Ovary (tissue), 10 donors: ENCODE measurements at regions of chr17 and their contacts with region 1.

Region 1: DNA sequence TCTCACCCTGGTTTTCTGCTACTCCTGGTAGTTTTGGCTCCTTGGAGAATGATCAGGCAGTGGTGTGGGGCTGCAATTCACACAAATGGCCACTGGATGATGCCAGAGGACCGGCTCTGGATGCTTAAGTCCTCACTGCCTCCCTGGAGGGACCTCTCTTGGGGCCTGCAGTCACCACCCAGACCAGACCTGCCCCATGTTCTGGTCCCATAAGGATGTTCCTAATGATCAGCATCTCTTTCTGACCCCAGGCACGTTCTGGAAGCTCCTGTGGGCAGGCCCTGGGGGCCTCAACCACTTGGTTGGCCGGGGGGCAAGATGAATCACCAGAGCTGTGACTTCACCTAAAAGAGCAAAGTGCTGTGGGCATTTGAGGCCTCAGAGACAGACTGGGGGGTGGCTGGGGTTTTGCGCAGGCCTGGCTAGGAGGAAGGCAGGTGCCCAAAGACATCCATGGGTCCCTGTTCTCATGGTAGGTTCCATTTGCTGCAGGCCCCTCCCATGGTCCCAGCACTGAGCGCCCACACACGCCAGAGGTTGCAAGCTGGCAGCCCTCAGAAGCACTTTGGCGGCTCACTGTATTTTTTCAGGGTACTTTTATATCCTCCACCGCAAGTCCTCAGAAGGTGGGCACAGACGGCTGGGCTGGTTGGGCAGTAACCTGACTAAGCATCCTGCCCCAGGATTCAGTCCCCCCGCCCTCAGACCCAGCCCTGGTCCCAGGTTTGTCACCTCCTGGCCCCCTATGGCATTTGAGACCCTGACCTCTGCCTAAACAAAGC is 53.2 kb downstream of the NT5M start:
- DNase-seq: peak; percentile 66 to 87 (median 78)
- H3K4me3 ChIP-seq: no peak overlapping the region
- H3K27ac ChIP-seq: no peak overlapping the region
- H3K4me1 ChIP-seq: no peaks in the 10 kb centered on the region
- H3K27me3 ChIP-seq: no peaks in the 10 kb centered on the region
- CTCF ChIP-seq: peak; percentile 90 to 97 (median 95)
- EP300 ChIP-seq: no peak
- POLR2A ChIP-seq: no peak

Region 2: GRCh38 chr17:17641621-17642409 is 285.5 kb after region 1 on chr17:
- intact Hi-C with region 1: loop called (anchors 2 kb)
- DNase-seq: peak; percentile 72 to 87 (median 84)
- H3K4me3 ChIP-seq: no peak overlapping the region
- H3K27ac ChIP-seq: no peak overlapping the region
- H3K4me1 ChIP-seq: no peaks in the 10 kb centered on the region
- H3K27me3 ChIP-seq: no peaks in the 10 kb centered on the region
- CTCF ChIP-seq: peak; percentile 86 to 92 (median 89)
- EP300 ChIP-seq: no peak
- POLR2A ChIP-seq: no peak